Activated CD4-positive, alpha-beta memory T cell treated with anti-CD3 and anti-CD28 coated beads for 36 hours (primary cell): ENCODE measurements at regions of chr6 and their contacts with region 1.

Region 1: DNA sequence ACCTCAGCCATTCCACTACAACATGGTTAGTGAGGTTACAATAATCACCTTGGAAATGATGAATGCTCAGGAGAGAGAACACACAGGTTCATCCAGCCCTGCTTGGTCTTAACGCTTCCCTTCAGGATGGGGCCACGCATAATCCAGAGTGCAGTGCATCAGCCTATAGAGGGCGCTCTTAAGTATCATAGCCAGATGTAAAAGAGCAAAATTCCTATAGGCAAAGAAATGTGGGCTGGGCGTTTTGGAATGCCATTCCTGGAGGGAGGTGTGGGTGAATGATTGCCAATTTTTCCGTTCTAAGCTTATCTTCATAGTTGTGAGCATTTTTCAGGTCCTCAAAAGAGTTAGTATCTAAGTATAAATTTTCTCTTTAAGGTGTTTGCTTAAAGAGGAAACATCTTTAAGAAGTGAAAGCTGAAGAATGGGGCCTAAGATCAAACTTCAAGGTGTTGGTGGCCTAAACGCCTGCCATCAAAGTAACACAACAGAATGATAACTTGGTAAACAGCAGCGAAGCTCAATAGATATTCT is 1.8 kb downstream of the RIPOR2 start:
- DNase-seq: peak; percentile 60
- H3K4me3 Mint-ChIP-seq: peak overlapping the region; percentile 87
- H3K27ac Mint-ChIP-seq: peak overlapping the region; percentile 97
- H3K4me1 Mint-ChIP-seq: peaks cover 87% of the 10 kb centered on the region
- H3K27me3 Mint-ChIP-seq: no peaks in the 10 kb centered on the region

Region 2: GRCh38 chr6:23940466-23940865 is 993.5 kb before region 1 on chr6:
- CTCF ChIA-PET with region 1: no interaction called
- POLR2A ChIA-PET with region 1: no interaction called
- intact Hi-C with region 1: no loop called
- DNase-seq: no peak
- H3K4me3 Mint-ChIP-seq: no peak overlapping the region
- H3K27ac Mint-ChIP-seq: no peak overlapping the region
- H3K4me1 Mint-ChIP-seq: no peaks in the 10 kb centered on the region
- H3K27me3 Mint-ChIP-seq: no peaks in the 10 kb centered on the region

Region 3: GRCh38 chr6:24874776-24875534 is 59.0 kb before region 1 on chr6:
- CTCF ChIA-PET with region 1: interaction called, 53 read pairs
- POLR2A ChIA-PET with region 1: interaction called, 3 read pairs
- intact Hi-C with region 1: no loop called
- DNase-seq: no peak
- H3K4me3 Mint-ChIP-seq: no peak overlapping the region
- H3K27ac Mint-ChIP-seq: peak overlapping the region; percentile 12
- H3K4me1 Mint-ChIP-seq: peaks cover 59% of the 10 kb centered on the region
- H3K27me3 Mint-ChIP-seq: no peaks in the 10 kb centered on the region

Region 4: GRCh38 chr6:24905483-24905882 is 28.5 kb before region 1 on chr6:
- CTCF ChIA-PET with region 1: interaction called, 109 read pairs
- POLR2A ChIA-PET with region 1: interaction called, 45 read pairs
- intact Hi-C with region 1: loop called (anchors 1 kb)
- DNase-seq: no peak
- H3K4me3 Mint-ChIP-seq: no peak overlapping the region
- H3K27ac Mint-ChIP-seq: peak overlapping the region; percentile 95
- H3K4me1 Mint-ChIP-seq: peaks cover 90% of the 10 kb centered on the region
- H3K27me3 Mint-ChIP-seq: no peaks in the 10 kb centered on the region

Region 5: GRCh38 chr6:24960991-24961475 is 27.1 kb after region 1 on chr6:
- CTCF ChIA-PET with region 1: interaction called, 21 read pairs
- POLR2A ChIA-PET with region 1: interaction called, 5 read pairs
- intact Hi-C with region 1: no loop called
- DNase-seq: no peak
- H3K4me3 Mint-ChIP-seq: peak overlapping the region; percentile 23
- H3K27ac Mint-ChIP-seq: peak overlapping the region; percentile 71
- H3K4me1 Mint-ChIP-seq: peaks cover 75% of the 10 kb centered on the region
- H3K27me3 Mint-ChIP-seq: no peaks in the 10 kb centered on the region

Region 6: DNA sequence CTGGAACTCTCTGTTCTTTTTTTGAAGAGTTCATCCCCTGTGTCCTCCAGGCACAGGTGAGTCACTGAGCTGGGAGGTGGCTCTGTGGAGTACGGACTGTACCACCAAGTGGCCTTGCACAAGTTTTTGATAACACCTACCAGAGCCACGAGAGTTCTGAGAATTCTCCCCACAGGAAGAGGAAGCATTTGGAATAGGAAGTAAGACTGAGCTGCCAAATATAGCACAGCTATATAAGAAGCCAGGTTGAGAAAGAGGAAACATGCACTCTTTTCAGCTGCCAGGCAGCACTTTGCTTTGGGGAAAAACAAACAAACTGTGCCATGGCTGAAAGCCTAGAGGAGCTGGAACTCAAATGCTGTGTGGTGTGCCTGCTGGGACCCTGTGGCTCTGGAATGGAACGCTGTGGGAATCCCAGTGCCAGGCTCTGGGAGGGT is 72.6 kb after region 1 on chr6:
- CTCF ChIA-PET with region 1: interaction called, 24 read pairs
- POLR2A ChIA-PET with region 1: interaction called, 4 read pairs
- intact Hi-C with region 1: loop called (anchors 2 kb)
- DNase-seq: peak; percentile 66
- H3K4me3 Mint-ChIP-seq: peak overlapping the region; percentile 10
- H3K27ac Mint-ChIP-seq: peak overlapping the region; percentile 78
- H3K4me1 Mint-ChIP-seq: peaks cover 77% of the 10 kb centered on the region
- H3K27me3 Mint-ChIP-seq: no peaks in the 10 kb centered on the region

Region 7: GRCh38 chr6:25138237-25139125 is 204.5 kb after region 1 on chr6:
- CTCF ChIA-PET with region 1: no interaction called
- POLR2A ChIA-PET with region 1: interaction called, 6 read pairs
- intact Hi-C with region 1: loop called (anchors 2 kb)
- DNase-seq: peak; percentile 81
- H3K4me3 Mint-ChIP-seq: peak overlapping the region; percentile 89
- H3K27ac Mint-ChIP-seq: peak overlapping the region; percentile 99
- H3K4me1 Mint-ChIP-seq: peaks cover 40% of the 10 kb centered on the region
- H3K27me3 Mint-ChIP-seq: no peaks in the 10 kb centered on the region